ENCODE measurements at regions of chr14 and their contacts with region 1.

Region 1: DNA sequence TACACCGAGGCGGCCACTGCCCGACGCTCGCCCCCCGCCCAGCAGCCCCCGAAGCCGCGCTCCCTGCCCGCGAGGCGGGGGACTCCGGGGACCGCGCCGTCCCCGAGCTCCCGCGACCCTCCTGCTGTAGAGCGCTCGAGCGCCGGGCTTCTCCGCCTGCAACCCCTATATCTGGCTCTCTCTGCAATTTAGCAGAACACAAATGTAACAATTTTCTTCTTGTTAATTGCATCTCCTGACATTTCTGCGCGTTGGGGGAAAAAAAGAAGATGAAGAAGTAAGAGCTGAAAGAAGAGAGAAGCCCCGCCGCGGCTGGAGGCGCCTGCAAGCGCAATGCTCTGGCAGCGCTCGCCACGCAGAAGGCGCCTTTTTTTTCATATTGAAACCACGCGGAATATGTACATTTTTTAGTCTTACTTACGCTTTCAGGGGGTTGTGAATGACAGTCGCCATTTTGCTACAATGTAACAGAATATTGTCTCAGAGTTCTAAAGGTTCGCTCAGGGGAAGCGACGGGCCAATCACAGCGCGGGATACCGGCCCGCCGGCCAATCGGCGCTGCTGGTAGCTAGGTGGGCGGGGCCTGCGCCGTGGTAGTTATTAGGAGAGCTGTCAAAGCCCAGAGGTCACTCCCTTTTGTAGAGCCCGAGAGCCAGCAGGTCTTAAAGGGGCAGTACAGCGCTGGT is at the start of gene DPF3:
- DNase-seq: peak; percentile 93 to 94
- ATAC-seq: peak; percentile 95 to 99 (median 98)
- H3K4me3 ChIP-seq: peak within 1 kb of the TSS; percentile 65
- H3K4me3 Mint-ChIP-seq: peak within 1 kb of the TSS; percentile 97
- H3K27ac ChIP-seq: no peak within 1 kb of the TSS
- H3K27ac Mint-ChIP-seq: peak within 1 kb of the TSS; percentile 81
- H3K4me1 ChIP-seq: peaks cover 28% of the 10 kb centered on the region
- H3K4me1 Mint-ChIP-seq: peaks cover 26 to 29% of the 10 kb centered on the region in 2 donors
- H3K27me3 ChIP-seq: peaks cover 38% of the 10 kb centered on the region
- H3K27me3 Mint-ChIP-seq: peaks cover 42 to 63% of the 10 kb centered on the region in 2 donors
- CTCF ChIP-seq: no peak
- total RNA-seq, gene DPF3: 1.4 to 1.8 (median 1.4) TPM

Region 2: DNA sequence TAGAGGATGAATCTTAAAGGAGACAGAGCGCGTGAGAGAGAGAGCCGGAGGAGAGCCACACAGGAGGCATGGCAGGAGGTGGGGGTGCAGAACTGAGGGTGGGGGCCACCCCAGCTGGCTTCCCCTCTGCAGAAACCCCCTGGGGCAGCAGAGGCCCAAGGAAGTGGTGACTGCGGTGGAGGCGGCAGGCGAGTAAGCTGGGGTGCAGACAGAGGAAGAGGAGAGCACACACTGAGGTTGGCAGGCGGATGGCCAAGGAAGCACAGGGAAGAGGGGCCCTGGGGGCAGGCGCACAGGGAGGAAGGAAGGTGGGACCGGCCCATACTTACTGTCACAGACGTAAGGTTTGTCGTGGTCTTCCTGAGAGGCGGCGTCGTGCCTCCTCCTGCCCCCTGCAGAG is 179.7 kb before region 1 on chr14:
- intact Hi-C with region 1: loop called (anchors 1 kb)
- DNase-seq: peak; percentile 68 to 70
- ATAC-seq: peak; percentile 69 to 95 (median 74)
- H3K4me3 ChIP-seq: no peak overlapping the region
- H3K4me3 Mint-ChIP-seq: peak overlapping the region; percentile 77
- H3K27ac ChIP-seq: no peak overlapping the region
- H3K27ac Mint-ChIP-seq: peak overlapping the region; percentile 6 to 83
- H3K4me1 ChIP-seq: peaks cover 56% of the 10 kb centered on the region
- H3K4me1 Mint-ChIP-seq: peaks cover 42 to 64% of the 10 kb centered on the region in 2 donors
- H3K27me3 ChIP-seq: no peaks in the 10 kb centered on the region
- H3K27me3 Mint-ChIP-seq: peaks cover 16 to 29% of the 10 kb centered on the region in 2 donors
- CTCF ChIP-seq: no peak

Region 3: DNA sequence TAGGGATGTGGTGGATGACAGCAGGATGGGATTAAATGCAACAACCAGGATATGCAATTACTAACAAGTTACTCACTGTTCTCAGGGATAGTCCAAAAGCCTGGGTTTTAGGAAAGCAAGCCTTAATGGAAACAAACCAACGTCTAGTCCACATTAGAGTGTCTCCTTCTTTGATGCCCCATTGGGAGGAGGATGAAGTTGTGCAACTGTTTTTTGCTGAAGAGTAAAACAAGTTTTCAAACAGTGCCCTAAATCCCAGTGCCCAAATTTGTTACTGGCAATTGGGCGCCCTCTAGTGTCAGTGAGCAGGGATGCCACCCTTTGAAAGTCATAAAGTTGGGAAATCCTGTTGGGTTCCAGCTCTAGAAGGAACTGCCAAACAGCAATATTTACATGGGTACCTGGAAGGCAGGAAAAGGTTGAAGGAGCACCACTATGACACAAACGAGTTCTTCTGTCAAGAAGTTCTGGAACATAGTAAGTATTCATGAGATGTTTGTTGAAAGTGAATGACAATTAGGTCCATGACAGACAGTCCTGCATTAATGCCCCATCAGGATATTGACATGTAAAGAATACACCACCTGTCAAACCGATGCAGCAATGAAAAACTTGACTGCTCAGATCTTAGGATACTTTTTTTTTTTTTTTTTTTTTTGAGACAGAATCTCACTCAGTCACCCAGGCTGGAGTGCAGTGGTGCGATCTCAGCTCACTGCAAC is 11.2 kb after region 1 on chr14:
- intact Hi-C with region 1: no loop called
- DNase-seq: peak; percentile 38 to 86
- ATAC-seq: peak; percentile 73 to 88 (median 86)
- H3K4me3 ChIP-seq: no peak overlapping the region
- H3K4me3 Mint-ChIP-seq: no peak overlapping the region
- H3K27ac ChIP-seq: no peak overlapping the region
- H3K27ac Mint-ChIP-seq: no peak overlapping the region
- H3K4me1 ChIP-seq: no peaks in the 10 kb centered on the region
- H3K4me1 Mint-ChIP-seq: no peaks in the 10 kb centered on the region
- H3K27me3 ChIP-seq: peaks cover 2% of the 10 kb centered on the region
- H3K27me3 Mint-ChIP-seq: peaks cover 38 to 42% of the 10 kb centered on the region in 2 donors
- CTCF ChIP-seq: peak; percentile 93

Region 4: GRCh38 chr14:72926292-72927028 is 32.7 kb after region 1 on chr14 and contains the start of gene DCAF4:
- intact Hi-C with region 1: loop called (anchors 1 kb)
- DNase-seq: peak; percentile 80 to 96
- ATAC-seq: peak; percentile 95 to 98 (median 95)
- H3K4me3 ChIP-seq: peak within 1 kb of the TSS; percentile 76
- H3K4me3 Mint-ChIP-seq: peak within 1 kb of the TSS; percentile 93
- H3K27ac ChIP-seq: peak within 1 kb of the TSS; percentile 60
- H3K27ac Mint-ChIP-seq: peak within 1 kb of the TSS; percentile 74 to 83
- H3K4me1 ChIP-seq: peaks cover 17% of the 10 kb centered on the region
- H3K4me1 Mint-ChIP-seq: peaks cover 8 to 18% of the 10 kb centered on the region in 2 donors
- H3K27me3 ChIP-seq: no peaks in the 10 kb centered on the region
- H3K27me3 Mint-ChIP-seq: peaks cover 0 to 7% of the 10 kb centered on the region in 2 donors
- CTCF ChIP-seq: no peak
- total RNA-seq, gene DCAF4: 4.6 to 18.6 (median 16.5) TPM